Activated T-helper 1 cell treated with anti-CD3 and anti-CD28 coated beads, Interleukin-12 subunit alpha, Interleukin-12 subunit beta, Interleukin-2, Interleukin-4 antibody, amounts not matched to agents 30 ng/mL and 10 ng/mL and 1 ng/mL, durations not matched to agents 14 hours and 24 hours and 36 hours (primary cell): ENCODE measurements at regions of chr5 and their contacts with region 1.

Region 1: GRCh38 chr5:40258222-40258621 is 421.5 kb upstream of the PTGER4 start:
- DNase-seq: no peak
- H3K4me3 Mint-ChIP-seq: peak overlapping the region; percentile 38
- H3K27ac Mint-ChIP-seq: peak overlapping the region; percentile 83
- H3K4me1 Mint-ChIP-seq: peaks cover 21% of the 10 kb centered on the region
- H3K27me3 Mint-ChIP-seq: peaks cover 3% of the 10 kb centered on the region

Region 2: DNA sequence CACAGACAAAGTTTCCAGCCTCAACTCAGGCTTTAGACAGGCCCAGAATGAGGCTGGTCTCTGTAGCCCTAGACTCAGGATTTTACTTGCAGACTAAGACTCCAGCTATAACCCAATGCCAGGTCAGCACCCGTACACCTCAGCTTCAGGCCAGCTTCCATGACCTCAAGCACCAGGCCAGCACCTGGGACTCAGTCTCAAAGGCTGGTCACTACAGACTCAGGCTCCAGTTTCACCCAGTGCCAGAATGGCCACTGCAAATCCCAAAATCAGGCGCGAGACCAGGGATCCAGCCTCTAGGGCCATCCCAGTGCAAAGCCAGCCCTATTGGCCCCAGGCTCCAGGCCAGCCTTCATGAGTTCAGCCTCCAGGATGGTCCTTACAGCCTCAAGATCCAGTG is 938.8 kb before region 1 on chr5:
- intact Hi-C with region 1: no loop called
- DNase-seq: no peak
- H3K4me3 Mint-ChIP-seq: no peak overlapping the region
- H3K27ac Mint-ChIP-seq: no peak overlapping the region
- H3K4me1 Mint-ChIP-seq: no peaks in the 10 kb centered on the region
- H3K27me3 Mint-ChIP-seq: peaks cover 10% of the 10 kb centered on the region

Region 3: DNA sequence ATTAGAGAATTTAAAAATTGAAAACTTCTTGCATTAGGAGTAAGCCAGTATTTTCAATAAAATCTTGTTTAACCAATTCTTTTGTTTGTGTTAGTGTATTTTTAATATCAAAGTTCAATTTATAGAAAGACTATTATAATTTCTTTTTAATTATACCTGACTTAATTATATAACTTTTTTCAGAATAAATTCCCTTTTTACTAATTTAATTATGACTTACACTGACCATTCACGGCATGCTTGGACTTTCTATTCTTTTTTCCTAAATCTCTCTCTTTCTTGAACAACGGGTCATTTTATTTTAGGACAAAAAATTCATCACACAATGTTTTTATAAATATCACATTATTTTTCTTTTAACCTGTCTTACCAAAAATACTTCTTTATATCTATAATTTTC is 133.9 kb before region 1 on chr5:
- intact Hi-C with region 1: no loop called
- DNase-seq: no peak
- H3K4me3 Mint-ChIP-seq: no peak overlapping the region
- H3K27ac Mint-ChIP-seq: no peak overlapping the region
- H3K4me1 Mint-ChIP-seq: peaks cover 15% of the 10 kb centered on the region
- H3K27me3 Mint-ChIP-seq: no peaks in the 10 kb centered on the region

Region 4: DNA sequence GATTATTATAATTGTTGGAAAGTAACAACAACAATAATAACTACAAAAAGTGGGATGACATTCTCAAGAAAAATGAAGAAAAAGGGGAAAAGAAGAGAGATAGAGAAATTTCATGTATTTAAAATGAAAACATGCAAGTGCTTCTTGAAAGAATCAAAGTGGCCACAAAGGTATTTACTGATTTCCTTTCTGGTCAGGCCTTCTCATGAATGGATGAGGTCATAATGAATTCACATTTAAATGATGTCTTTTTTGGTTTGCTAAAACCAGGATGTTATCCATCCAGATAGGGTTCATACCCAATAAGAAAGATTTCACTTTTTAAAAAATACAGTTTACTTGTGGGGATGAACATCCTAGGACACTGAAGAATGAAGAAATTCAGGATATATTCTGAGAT is 25.0 kb before region 1 on chr5:
- intact Hi-C with region 1: loop called (anchors 1 kb)
- DNase-seq: no peak
- H3K4me3 Mint-ChIP-seq: no peak overlapping the region
- H3K27ac Mint-ChIP-seq: no peak overlapping the region
- H3K4me1 Mint-ChIP-seq: peaks cover 25% of the 10 kb centered on the region
- H3K27me3 Mint-ChIP-seq: no peaks in the 10 kb centered on the region

Region 5: GRCh38 chr5:40270274-40270845 is 12.1 kb after region 1 on chr5:
- intact Hi-C with region 1: loop called (anchors 1 kb)
- DNase-seq: no peak
- H3K4me3 Mint-ChIP-seq: no peak overlapping the region
- H3K27ac Mint-ChIP-seq: peak overlapping the region; percentile 37
- H3K4me1 Mint-ChIP-seq: peaks cover 41% of the 10 kb centered on the region
- H3K27me3 Mint-ChIP-seq: no peaks in the 10 kb centered on the region

Region 6: GRCh38 chr5:40288800-40289485 is 30.7 kb after region 1 on chr5:
- intact Hi-C with region 1: no loop called
- DNase-seq: no peak
- H3K4me3 Mint-ChIP-seq: no peak overlapping the region
- H3K27ac Mint-ChIP-seq: no peak overlapping the region
- H3K4me1 Mint-ChIP-seq: peaks cover 9% of the 10 kb centered on the region
- H3K27me3 Mint-ChIP-seq: no peaks in the 10 kb centered on the region